Naive thymus-derived CD4-positive, alpha-beta T cell (primary cell): ENCODE measurements at regions of chr14 and their contacts with region 1.

Region 1: GRCh38 chr14:75293920-75294642 is 15.5 kb downstream of the FOS start:
- DNase-seq: peak; percentile 92 to 98 (median 96)
- ATAC-seq: peak; percentile 92
- H3K4me3 ChIP-seq: peak overlapping the region; percentile 61
- H3K4me3 Mint-ChIP-seq: peak overlapping the region; percentile 79 to 93 (median 91)
- H3K27ac ChIP-seq: peak overlapping the region; percentile 96
- H3K27ac Mint-ChIP-seq: peak overlapping the region; percentile 85 to 97 (median 94)
- H3K4me1 ChIP-seq: peaks cover 17 to 25% of the 10 kb centered on the region in 2 donors
- H3K4me1 Mint-ChIP-seq: peaks cover 10 to 26% (median 22%) of the 10 kb centered on the region in 7 donors
- H3K27me3 ChIP-seq: no peaks in the 10 kb centered on the region
- H3K27me3 Mint-ChIP-seq: peaks cover 0 to 24% (median 0%) of the 10 kb centered on the region in 5 donors

Region 2: GRCh38 chr14:74658537-74659130 is 635.4 kb before region 1 on chr14:
- CTCF ChIA-PET with region 1: no interaction called
- POLR2A ChIA-PET with region 1: no interaction called
- intact Hi-C with region 1: no loop called
- DNase-seq: no peak
- ATAC-seq: no peak
- H3K4me3 ChIP-seq: no peak overlapping the region
- H3K4me3 Mint-ChIP-seq: no peak overlapping the region
- H3K27ac ChIP-seq: no peak overlapping the region
- H3K27ac Mint-ChIP-seq: peak overlapping the region in 2 of 9 donors; percentile 2 to 21
- H3K4me1 ChIP-seq: no peaks in the 10 kb centered on the region
- H3K4me1 Mint-ChIP-seq: no peaks in the 10 kb centered on the region
- H3K27me3 ChIP-seq: no peaks in the 10 kb centered on the region
- H3K27me3 Mint-ChIP-seq: no peaks in the 10 kb centered on the region

Region 3: DNA sequence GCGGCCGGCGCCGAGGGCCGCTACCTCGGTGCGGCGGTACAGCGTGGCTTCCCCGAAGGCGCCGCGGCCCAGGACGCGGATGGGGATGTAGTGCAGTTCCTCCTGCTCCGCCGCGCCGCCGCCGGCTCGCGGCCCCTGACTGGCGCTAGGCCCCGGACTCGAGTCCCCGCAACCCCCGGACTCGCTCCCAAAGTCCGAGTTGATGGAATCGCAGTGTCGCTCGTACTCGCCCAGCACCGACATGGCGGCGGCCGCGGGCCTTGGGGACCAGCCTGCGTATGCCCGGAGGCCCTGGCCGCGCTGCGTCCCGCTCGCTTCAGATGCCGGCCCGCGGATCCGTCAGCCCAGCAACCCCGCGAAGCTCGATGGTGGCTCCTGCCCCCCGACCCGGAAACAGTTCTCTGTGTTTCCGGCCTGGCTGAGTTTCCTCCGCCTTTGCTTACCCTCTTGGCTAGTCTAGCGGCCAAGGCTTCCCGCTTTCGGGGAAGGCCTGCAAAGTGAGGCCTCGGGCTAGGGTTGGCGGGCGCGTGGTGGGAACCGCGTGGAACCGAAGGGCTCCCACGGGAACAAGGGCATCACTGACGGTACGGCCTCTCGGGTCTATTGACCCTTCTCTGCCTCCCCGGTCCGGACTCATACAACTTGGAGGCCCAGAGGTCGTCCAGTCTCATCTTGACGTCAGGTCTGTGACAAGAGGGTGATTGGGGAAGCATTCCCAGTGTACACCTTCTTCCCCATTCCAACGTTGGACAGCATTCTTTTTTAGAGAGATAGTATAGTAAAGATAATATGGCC is 167.2 kb before region 1 on chr14 and contains the start of gene NEK9:
- CTCF ChIA-PET with region 1: interaction called, 20 read pairs
- POLR2A ChIA-PET with region 1: interaction called, 27 read pairs
- intact Hi-C with region 1: loop called (anchors 1 kb)
- DNase-seq: peak; percentile 78 to 91 (median 87)
- ATAC-seq: peak; percentile 92
- H3K4me3 ChIP-seq: peak within 1 kb of the TSS; percentile 87
- H3K4me3 Mint-ChIP-seq: peak within 1 kb of the TSS; percentile 87 to 99 (median 96)
- H3K27ac ChIP-seq: peak within 1 kb of the TSS; percentile 89
- H3K27ac Mint-ChIP-seq: peak within 1 kb of the TSS; percentile 95 to 98 (median 98)
- H3K4me1 ChIP-seq: peaks cover 22 to 29% of the 10 kb centered on the region in 2 donors
- H3K4me1 Mint-ChIP-seq: peaks cover 36 to 48% (median 44%) of the 10 kb centered on the region in 7 donors
- H3K27me3 ChIP-seq: no peaks in the 10 kb centered on the region
- H3K27me3 Mint-ChIP-seq: no peaks in the 10 kb centered on the region
- total RNA-seq, gene NEK9: 81.7 to 141 (median 84.7) TPM

Region 4: GRCh38 chr14:75141967-75142366 is 152.1 kb before region 1 on chr14:
- CTCF ChIA-PET with region 1: interaction called, 40 read pairs
- POLR2A ChIA-PET with region 1: interaction called, 4 read pairs
- intact Hi-C with region 1: loop called in 1 of 2 experiments (anchors 1 kb)
- DNase-seq: peak in 7 of 9 donors; percentile 26 to 59 (median 47)
- ATAC-seq: peak; percentile 55
- H3K4me3 ChIP-seq: no peak overlapping the region
- H3K4me3 Mint-ChIP-seq: peak overlapping the region in 1 of 10 donors; percentile 47
- H3K27ac ChIP-seq: no peak overlapping the region
- H3K27ac Mint-ChIP-seq: peak overlapping the region in 8 of 9 donors; percentile 30 to 81 (median 56)
- H3K4me1 ChIP-seq: peaks cover 20 to 50% of the 10 kb centered on the region in 2 donors
- H3K4me1 Mint-ChIP-seq: peaks cover 52 to 86% (median 74%) of the 10 kb centered on the region in 7 donors
- H3K27me3 ChIP-seq: no peaks in the 10 kb centered on the region
- H3K27me3 Mint-ChIP-seq: no peaks in the 10 kb centered on the region

Region 5: DNA sequence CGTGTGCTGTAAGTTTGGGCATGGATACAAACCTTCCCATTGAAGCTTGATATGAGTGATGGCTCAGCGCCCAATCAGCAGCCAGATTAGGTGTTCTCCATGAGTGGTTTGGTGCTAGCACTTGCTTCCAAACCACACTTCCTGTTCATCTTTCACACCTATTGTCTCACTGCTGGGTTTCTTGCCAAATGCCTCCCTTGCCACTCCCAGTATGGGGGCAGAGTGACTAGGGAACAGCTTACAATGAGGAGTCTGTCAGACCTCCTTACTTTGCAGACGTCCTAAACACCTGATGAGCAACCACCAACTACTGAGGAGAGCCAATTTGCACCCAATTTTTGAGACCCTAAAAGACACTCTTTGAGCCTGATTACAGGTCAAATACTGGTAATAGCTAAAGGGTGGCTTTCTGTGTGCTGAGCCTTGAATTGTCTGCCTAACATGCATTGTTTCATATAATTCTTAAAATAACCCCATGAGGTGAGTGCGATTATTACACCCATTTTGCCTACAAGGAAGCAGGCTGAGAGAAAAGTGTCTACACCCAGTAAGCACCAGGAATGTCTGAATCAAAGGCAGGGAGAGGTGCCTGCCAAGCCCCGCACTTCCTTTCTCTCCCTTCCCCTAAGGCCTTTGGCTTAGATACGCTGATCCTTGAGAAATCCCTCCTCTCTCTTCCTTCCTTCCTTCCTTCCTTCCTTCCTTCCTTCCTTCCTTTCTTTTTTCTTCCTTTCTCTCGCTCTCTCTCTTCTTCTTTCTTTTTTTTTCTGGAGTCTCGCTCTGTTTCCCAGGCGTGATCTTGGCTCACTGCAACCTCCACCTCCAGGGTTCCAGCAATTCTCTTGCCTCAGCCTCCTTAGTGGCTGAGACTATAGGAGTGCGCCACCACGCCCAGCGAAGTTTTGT is 63.7 kb before region 1 on chr14:
- CTCF ChIA-PET with region 1: interaction called, 37 read pairs
- POLR2A ChIA-PET with region 1: interaction called, 7 read pairs
- intact Hi-C with region 1: loop called (anchors 1 to 2 kb)
- DNase-seq: peak in 6 of 9 donors; percentile 26 to 50 (median 41)
- ATAC-seq: peak; percentile 59
- H3K4me3 ChIP-seq: no peak overlapping the region
- H3K4me3 Mint-ChIP-seq: peak overlapping the region; percentile 3 to 79 (median 50)
- H3K27ac ChIP-seq: no peak overlapping the region
- H3K27ac Mint-ChIP-seq: peak overlapping the region; percentile 42 to 96 (median 73)
- H3K4me1 ChIP-seq: peaks cover 33 to 41% of the 10 kb centered on the region in 2 donors
- H3K4me1 Mint-ChIP-seq: peaks cover 43 to 75% (median 66%) of the 10 kb centered on the region in 7 donors
- H3K27me3 ChIP-seq: no peaks in the 10 kb centered on the region
- H3K27me3 Mint-ChIP-seq: peaks cover 0 to 22% (median 0%) of the 10 kb centered on the region in 5 donors

Region 6: GRCh38 chr14:75258615-75259466 is 35.2 kb before region 1 on chr14:
- CTCF ChIA-PET with region 1: interaction called, 5 read pairs
- POLR2A ChIA-PET with region 1: interaction called, 5 read pairs
- intact Hi-C with region 1: loop called (anchors 1 kb)
- DNase-seq: peak; percentile 97 to 100 (median 100)
- ATAC-seq: peak; percentile 94
- H3K4me3 ChIP-seq: peak overlapping the region; percentile 75
- H3K4me3 Mint-ChIP-seq: peak overlapping the region; percentile 75 to 95 (median 92)
- H3K27ac ChIP-seq: peak overlapping the region; percentile 94
- H3K27ac Mint-ChIP-seq: peak overlapping the region; percentile 98 to 100 (median 100)
- H3K4me1 ChIP-seq: peaks cover 16 to 19% of the 10 kb centered on the region in 2 donors
- H3K4me1 Mint-ChIP-seq: peaks cover 14 to 50% (median 32%) of the 10 kb centered on the region in 7 donors
- H3K27me3 ChIP-seq: peaks cover 0 to 3% of the 10 kb centered on the region in 2 donors
- H3K27me3 Mint-ChIP-seq: peaks cover 0 to 74% (median 0%) of the 10 kb centered on the region in 5 donors

Region 7: GRCh38 chr14:75278422-75279161 is 15.5 kb before region 1 on chr14 and contains the start of gene FOS:
- CTCF ChIA-PET with region 1: no interaction called
- POLR2A ChIA-PET with region 1: interaction called, 5 read pairs
- intact Hi-C with region 1: loop called (anchors 1 kb)
- DNase-seq: peak; percentile 87 to 99 (median 98)
- ATAC-seq: peak; percentile 74
- H3K4me3 ChIP-seq: peak within 1 kb of the TSS; percentile 86
- H3K4me3 Mint-ChIP-seq: peak within 1 kb of the TSS; percentile 92 to 97 (median 94)
- H3K27ac ChIP-seq: peak within 1 kb of the TSS; percentile 91
- H3K27ac Mint-ChIP-seq: peak within 1 kb of the TSS; percentile 87 to 100 (median 99)
- H3K4me1 ChIP-seq: peaks cover 32 to 34% of the 10 kb centered on the region in 2 donors
- H3K4me1 Mint-ChIP-seq: peaks cover 21 to 64% (median 50%) of the 10 kb centered on the region in 7 donors
- H3K27me3 ChIP-seq: peaks cover 4 to 5% of the 10 kb centered on the region in 2 donors
- H3K27me3 Mint-ChIP-seq: peaks cover 0 to 81% (median 3%) of the 10 kb centered on the region in 5 donors
- total RNA-seq, gene FOS: 9.4 to 4,557 (median 14.4) TPM